ENCODE measurements at regions of chr10 and their contacts with region 1.

Region 1: GRCh38 chr10:50224330-50224952 is 26.9 kb downstream of the ASAH2 start:
- DNase-seq: peak; percentile 90
- H3K4me3 ChIP-seq: no peak overlapping the region
- H3K27ac ChIP-seq: no peak overlapping the region
- H3K4me1 ChIP-seq: no peaks in the 10 kb centered on the region
- H3K27me3 ChIP-seq: peaks cover 10% of the 10 kb centered on the region

Region 2: GRCh38 chr10:49426592-49427360 is 797.7 kb before region 1 on chr10:
- in situ Hi-C with region 1: no loop called
- DNase-seq: no peak
- H3K4me3 ChIP-seq: no peak overlapping the region
- H3K27ac ChIP-seq: no peak overlapping the region
- H3K4me1 ChIP-seq: no peaks in the 10 kb centered on the region
- H3K27me3 ChIP-seq: no peaks in the 10 kb centered on the region

Region 3: DNA sequence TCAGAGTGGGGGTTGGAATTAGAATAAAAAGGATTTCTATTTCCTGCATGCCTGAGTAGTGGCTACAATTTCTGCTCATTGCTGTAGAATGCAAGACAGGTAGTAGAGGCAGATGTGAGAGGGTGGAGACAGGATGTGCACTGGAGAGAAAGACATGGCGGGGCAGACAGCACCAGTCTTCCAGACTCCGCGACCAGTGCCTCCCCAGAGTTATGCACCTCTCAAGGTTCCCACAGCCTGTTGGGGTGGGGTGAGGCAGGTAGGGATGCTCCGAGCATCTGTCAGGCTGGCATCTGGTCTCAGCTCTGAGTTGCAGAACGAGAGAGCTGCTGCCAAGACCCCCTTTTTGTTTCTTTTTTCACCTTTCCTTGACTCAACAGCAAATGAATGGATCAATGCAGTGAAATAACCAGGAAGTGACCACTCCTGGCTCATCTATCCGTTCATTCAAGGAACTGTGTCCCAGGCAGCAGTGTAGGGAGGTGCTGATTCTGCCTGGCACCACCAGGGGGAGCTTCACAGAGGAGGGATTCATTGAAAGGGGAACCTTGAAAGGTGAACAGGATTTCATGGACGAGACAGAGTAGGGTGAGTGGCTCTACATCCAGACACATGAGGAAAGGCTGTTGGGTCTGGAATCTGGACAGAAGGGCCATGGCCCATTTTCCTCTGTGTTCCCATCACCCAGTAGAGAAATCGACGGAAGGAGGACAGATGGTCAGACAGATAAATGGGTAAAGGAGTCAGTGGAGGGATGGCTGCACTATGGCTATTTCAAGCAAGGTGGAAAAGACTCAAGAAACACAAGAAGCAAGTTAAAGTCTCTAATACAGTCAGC is 631.5 kb before region 1 on chr10:
- in situ Hi-C with region 1: loop called (anchors 25 kb)
- DNase-seq: peak; percentile 74
- H3K4me3 ChIP-seq: no peak overlapping the region
- H3K27ac ChIP-seq: no peak overlapping the region
- H3K4me1 ChIP-seq: peaks cover 10% of the 10 kb centered on the region; the same call in 1 of the 2 replicates
- H3K27me3 ChIP-seq: no peaks in the 10 kb centered on the region

Region 4: GRCh38 chr10:50063100-50063499 is 161.3 kb before region 1 on chr10:
- in situ Hi-C with region 1: no loop called
- DNase-seq: no peak
- H3K4me3 ChIP-seq: no peak overlapping the region
- H3K27ac ChIP-seq: no peak overlapping the region
- H3K4me1 ChIP-seq: no peaks in the 10 kb centered on the region
- H3K27me3 ChIP-seq: no peaks in the 10 kb centered on the region

Measured in GM23248 (cell line).